Naive thymus-derived CD4-positive, alpha-beta T cell (primary cell): ENCODE measurements at regions of chr9 and their contacts with region 1.

Region 1: DNA sequence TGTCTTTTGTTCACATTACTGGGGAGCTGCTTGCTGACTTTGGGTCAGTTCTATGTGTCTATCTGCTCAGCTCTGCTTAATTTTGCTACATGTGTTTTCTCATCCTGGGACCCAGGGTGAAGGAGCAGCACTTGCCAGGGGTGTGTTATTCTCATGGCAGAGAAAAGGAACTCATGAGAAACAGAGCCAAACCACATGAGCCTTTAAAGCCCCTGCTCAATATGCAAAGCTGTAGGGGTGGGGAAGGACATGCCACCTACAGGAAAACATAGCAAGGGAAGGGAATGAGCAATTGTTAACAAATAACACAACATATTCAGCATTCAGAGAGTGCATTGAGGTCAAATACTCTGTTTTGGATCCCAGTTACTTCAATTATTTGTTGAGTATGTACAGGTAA is 290.9 kb downstream of the CDK5RAP2 start:
- DNase-seq: no peak
- ATAC-seq: no peak
- H3K4me3 ChIP-seq: no peak overlapping the region
- H3K4me3 Mint-ChIP-seq: no peak overlapping the region
- H3K27ac ChIP-seq: no peak overlapping the region
- H3K27ac Mint-ChIP-seq: no peak overlapping the region
- H3K4me1 ChIP-seq: no peaks in the 10 kb centered on the region
- H3K4me1 Mint-ChIP-seq: no peaks in the 10 kb centered on the region
- H3K27me3 ChIP-seq: no peaks in the 10 kb centered on the region
- H3K27me3 Mint-ChIP-seq: peaks cover 0 to 10% (median 7%) of the 10 kb centered on the region in 5 donors

Region 2: DNA sequence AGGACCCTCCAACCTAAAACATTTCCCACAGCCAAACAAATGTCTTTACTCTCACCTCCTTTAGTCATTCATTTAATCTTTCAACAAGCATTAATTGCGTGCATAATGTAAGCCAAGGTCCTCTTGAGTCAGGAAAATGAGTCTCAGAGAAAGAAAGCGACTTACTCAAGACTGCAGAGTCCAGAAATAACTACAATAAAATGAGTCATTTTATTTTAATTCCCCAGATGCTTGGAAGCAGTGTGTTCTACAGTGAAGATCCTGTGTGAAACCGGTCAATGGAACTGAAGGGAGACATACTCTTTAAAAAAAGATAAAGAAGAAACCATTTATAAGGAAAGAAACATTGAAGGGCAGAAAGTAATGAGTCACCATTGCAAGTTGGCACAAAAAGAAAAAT is 222.8 kb before region 1 on chr9:
- CTCF ChIA-PET with region 1: interaction called, 10 read pairs
- POLR2A ChIA-PET with region 1: no interaction called
- intact Hi-C with region 1: no loop called
- DNase-seq: no peak
- ATAC-seq: no peak
- H3K4me3 ChIP-seq: no peak overlapping the region
- H3K4me3 Mint-ChIP-seq: no peak overlapping the region
- H3K27ac ChIP-seq: no peak overlapping the region
- H3K27ac Mint-ChIP-seq: no peak overlapping the region
- H3K4me1 ChIP-seq: no peaks in the 10 kb centered on the region
- H3K4me1 Mint-ChIP-seq: no peaks in the 10 kb centered on the region
- H3K27me3 ChIP-seq: no peaks in the 10 kb centered on the region
- H3K27me3 Mint-ChIP-seq: peaks cover 0 to 5% (median 0%) of the 10 kb centered on the region in 5 donors